ENCODE measurements at regions of chr7 and their contacts with region 1.

Region 1: DNA sequence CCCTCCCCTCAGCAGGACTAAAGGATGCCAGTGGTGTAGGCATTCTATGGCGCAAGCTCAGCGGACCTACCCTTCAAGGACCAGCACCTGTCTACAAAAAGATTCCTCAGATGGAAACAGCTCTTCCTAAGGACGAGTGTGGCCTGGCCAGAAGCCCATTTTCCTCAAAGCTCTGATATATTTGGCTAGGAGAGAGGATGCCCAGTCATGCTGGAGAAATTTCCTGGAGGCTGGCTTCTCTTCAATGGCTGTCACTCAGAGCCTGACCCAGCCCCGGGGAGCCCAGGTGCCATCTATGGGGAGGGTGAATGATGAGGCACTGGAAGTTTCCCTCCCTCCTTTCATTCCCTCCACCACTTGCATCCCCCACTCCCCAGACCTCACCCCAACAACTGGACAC is 111.5 kb downstream of the PLXNA4 start:
- DNase-seq: no peak
- ATAC-seq: no peak
- H3K4me3 ChIP-seq: no peak overlapping the region
- H3K4me3 Mint-ChIP-seq: no peak overlapping the region
- H3K27ac ChIP-seq: no peak overlapping the region
- H3K27ac Mint-ChIP-seq: peak overlapping the region in 1 of 9 donors; percentile 20
- H3K4me1 ChIP-seq: peaks cover 10 to 16% of the 10 kb centered on the region in 2 donors
- H3K4me1 Mint-ChIP-seq: peaks cover 20 to 65% (median 29%) of the 10 kb centered on the region in 7 donors
- H3K27me3 ChIP-seq: no peaks in the 10 kb centered on the region
- H3K27me3 Mint-ChIP-seq: peaks cover 0 to 21% (median 0%) of the 10 kb centered on the region in 5 donors

Region 2: DNA sequence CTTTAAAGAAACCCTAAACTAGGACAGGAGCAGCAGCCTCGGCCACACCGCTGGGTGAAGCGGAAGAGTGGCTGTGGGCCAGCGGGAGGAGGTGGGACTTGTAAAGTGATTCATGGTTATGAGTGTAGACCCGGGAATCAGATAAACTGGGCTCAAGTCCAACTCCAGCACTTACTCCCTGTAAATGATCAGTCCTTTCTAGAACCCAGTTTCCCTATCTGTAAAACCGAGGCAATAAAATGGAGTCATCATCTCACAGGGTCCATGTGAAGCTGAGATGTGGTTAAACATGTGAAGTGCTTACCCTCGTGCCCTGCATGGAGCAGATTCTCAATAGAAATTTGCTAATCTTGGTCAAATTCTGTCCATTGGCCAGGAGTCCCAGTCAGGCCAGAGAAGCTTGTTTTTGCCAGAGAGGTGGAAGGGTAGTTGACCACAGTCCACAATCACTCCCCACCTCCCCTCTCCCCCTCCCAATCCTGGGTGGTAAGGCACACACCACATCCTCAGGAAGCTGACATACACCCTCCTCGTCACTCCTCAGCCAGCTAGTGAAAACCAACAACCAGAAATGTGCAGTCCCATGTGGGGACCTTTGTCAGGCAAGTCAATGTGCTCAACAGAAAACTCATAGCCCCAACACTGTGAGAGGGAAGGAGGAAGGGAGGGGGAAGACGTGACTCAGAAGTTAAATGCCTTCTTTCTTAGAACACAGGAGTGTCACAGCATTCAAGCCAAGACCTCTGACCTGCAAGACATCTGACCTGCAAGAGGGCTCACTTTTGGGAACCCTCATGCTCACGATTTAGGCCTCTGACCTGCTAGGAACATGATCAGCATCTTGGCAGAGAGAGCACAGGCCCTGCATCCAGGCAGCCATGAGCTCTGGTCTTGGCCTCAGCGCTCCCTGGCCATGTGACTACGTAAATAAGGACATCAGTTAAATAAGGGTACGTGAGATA is 33.6 kb before region 1 on chr7:
- CTCF ChIA-PET with region 1: interaction called, 3 read pairs
- POLR2A ChIA-PET with region 1: no interaction called
- intact Hi-C with region 1: loop called in 1 of 2 experiments (anchors 1 kb)
- DNase-seq: peak in 8 of 9 donors; percentile 18 to 75 (median 60)
- ATAC-seq: peak; percentile 85
- H3K4me3 ChIP-seq: peak overlapping the region; percentile 21
- H3K4me3 Mint-ChIP-seq: peak overlapping the region; percentile 22 to 83 (median 58)
- H3K27ac ChIP-seq: peak overlapping the region; percentile 34
- H3K27ac Mint-ChIP-seq: peak overlapping the region; percentile 70 to 97 (median 87)
- H3K4me1 ChIP-seq: peaks cover 47 to 69% of the 10 kb centered on the region in 2 donors
- H3K4me1 Mint-ChIP-seq: peaks cover 49 to 93% (median 83%) of the 10 kb centered on the region in 7 donors
- H3K27me3 ChIP-seq: no peaks in the 10 kb centered on the region
- H3K27me3 Mint-ChIP-seq: no peaks in the 10 kb centered on the region

Region 3: DNA sequence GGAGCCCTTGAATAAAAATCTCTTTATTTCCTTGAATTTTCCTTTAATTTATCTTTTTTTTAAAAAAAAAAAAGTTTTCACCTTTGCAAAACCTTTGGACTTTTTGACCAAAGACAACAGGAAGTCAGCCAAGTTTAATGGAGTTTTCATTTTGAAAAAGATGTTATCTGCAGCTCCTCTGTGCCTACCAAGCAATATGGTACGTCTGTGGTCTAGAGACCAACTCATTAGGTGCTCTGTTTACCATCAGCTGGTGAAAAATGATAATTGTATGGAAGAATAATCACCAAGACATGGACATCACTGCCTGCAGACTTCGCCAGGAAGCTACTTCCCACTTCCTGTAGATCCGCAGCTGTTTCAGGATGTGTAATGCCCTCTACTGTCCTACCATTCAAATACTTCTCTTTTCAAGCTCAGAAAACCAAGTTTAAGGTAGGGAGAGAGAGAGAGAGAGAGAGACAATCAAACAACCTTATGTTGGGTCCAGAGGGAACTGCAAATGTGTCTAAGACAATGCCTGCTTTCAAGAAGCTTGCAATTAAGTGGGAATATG is 92.8 kb after region 1 on chr7:
- CTCF ChIA-PET with region 1: no interaction called
- POLR2A ChIA-PET with region 1: no interaction called
- intact Hi-C with region 1: loop called in 1 of 2 experiments (anchors 5 kb)
- DNase-seq: no peak
- ATAC-seq: no peak
- H3K4me3 ChIP-seq: no peak overlapping the region
- H3K4me3 Mint-ChIP-seq: peak overlapping the region in 3 of 10 donors; percentile 8 to 48 (median 20)
- H3K27ac ChIP-seq: no peak overlapping the region
- H3K27ac Mint-ChIP-seq: peak overlapping the region in 1 of 9 donors; percentile 29
- H3K4me1 ChIP-seq: no peaks in the 10 kb centered on the region
- H3K4me1 Mint-ChIP-seq: peaks cover 0 to 33% (median 5%) of the 10 kb centered on the region in 7 donors
- H3K27me3 ChIP-seq: no peaks in the 10 kb centered on the region
- H3K27me3 Mint-ChIP-seq: peaks cover 0 to 52% (median 4%) of the 10 kb centered on the region in 5 donors

Region 4: DNA sequence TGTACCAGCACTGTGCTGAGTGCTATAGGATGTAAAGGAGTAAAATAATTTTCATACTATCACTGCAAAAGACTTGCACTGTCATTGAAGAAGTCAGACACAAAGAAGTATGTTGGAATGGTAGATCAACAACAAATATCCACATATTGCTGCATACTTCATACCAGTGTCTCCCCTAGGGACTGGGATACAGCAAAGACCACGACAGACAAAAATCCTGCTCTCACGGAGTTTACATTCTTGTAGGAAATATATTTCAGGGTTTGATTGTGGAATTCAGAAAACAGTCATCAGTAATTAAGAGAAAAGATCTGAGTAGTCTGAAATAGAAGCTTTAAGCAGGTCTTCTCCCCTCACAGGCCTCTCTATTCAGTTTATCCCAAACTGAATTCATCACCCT is 160.9 kb after region 1 on chr7:
- CTCF ChIA-PET with region 1: no interaction called
- POLR2A ChIA-PET with region 1: no interaction called
- intact Hi-C with region 1: no loop called
- DNase-seq: no peak
- ATAC-seq: no peak
- H3K4me3 ChIP-seq: no peak overlapping the region
- H3K4me3 Mint-ChIP-seq: no peak overlapping the region
- H3K27ac ChIP-seq: no peak overlapping the region
- H3K27ac Mint-ChIP-seq: no peak overlapping the region
- H3K4me1 ChIP-seq: no peaks in the 10 kb centered on the region
- H3K4me1 Mint-ChIP-seq: peaks cover 0 to 8% (median 4%) of the 10 kb centered on the region in 7 donors
- H3K27me3 ChIP-seq: no peaks in the 10 kb centered on the region
- H3K27me3 Mint-ChIP-seq: peaks cover 0 to 23% (median 0%) of the 10 kb centered on the region in 5 donors

Region 5: DNA sequence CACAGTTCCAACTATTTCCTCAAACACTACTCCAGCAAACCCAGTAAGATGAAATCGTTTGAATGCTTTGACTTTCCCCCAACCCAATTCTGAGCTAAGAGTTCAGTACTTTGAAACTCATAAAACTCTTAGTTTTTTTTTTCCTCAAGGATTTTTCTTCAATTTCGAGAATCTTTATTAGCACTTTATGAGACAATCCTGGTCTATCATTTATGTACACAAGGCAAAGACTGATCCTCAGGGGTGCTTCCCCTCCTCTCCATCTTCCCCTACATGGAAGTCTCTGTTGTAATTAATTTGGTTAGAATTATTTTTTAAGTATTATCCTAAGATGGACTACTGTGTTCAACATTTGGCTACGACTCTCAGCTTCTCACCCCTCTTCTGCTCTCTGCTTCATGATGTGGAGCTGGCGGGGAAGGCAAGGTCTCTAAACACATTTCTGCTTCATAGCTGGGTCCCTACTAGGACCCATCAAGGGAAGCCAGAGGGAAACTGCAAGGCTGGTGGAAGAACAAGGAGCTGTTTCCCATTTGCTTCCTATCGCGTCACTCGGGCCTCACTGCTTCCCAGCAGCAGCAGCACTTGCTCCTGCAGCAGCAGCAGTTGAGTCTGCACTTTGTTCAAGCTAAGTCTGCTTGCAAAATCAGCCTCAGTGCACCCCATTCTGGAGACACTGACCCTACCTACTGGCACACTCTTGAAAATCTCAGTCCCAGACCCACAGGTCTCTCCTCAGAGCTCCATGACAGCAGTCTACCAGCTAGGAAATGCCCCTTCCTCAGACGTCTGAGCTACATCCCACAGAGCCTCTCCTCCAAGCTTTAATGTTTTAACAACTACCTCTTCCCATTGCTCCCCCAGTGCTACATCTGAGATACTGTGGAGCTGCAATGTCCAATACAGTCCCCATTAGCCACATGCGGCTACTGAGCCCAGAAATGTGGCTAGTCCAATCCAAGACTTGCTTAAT is 527.2 kb after region 1 on chr7:
- CTCF ChIA-PET with region 1: no interaction called
- POLR2A ChIA-PET with region 1: no interaction called
- intact Hi-C with region 1: no loop called
- DNase-seq: no peak
- ATAC-seq: no peak
- H3K4me3 ChIP-seq: no peak overlapping the region
- H3K4me3 Mint-ChIP-seq: no peak overlapping the region
- H3K27ac ChIP-seq: no peak overlapping the region
- H3K27ac Mint-ChIP-seq: no peak overlapping the region
- H3K4me1 ChIP-seq: no peaks in the 10 kb centered on the region
- H3K4me1 Mint-ChIP-seq: peaks cover 0 to 47% (median 33%) of the 10 kb centered on the region in 7 donors
- H3K27me3 ChIP-seq: no peaks in the 10 kb centered on the region
- H3K27me3 Mint-ChIP-seq: no peaks in the 10 kb centered on the region